H1 (cell line): ENCODE measurements at regions of chr1 and their contacts with region 1.

Region 1: DNA sequence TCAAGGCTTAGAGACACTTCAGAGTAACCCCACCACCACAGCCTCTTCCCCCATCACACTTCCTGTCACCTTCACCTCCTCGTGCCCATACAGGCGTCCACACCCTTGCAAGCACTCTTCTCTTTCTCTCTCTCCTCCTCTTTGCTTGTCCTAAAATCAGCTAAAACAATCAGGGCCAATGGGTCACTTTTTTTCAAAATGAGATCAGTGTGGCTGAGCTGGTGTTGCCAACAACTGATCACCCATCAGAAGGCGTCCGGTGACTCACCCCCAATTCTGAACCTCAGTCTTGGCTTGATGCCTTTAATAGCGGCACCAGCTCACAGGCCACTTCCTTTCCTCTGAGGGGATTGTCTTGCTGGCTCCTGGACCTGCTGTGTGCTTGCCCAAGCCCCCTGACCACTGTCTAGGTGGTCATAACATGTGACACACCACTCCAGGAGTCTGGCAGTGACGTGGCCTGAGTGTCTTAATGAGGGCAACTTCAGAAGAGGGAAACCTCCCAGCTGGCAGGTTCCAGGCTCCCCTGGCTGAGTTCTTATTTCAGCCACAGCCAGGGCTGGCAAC is 1.6 kb downstream of the DRAXIN start:
- DNase-seq: no peak
- H3K4me3 ChIP-seq: peak overlapping the region in 3 of 4 experiments; percentile 75 to 99 (median 79); a peak in 4 of 8 replicates
- H3K27ac ChIP-seq: no peak overlapping the region
- H3K4me1 ChIP-seq: peaks cover 8 to 38% (median 26%) of the 10 kb centered on the region in 4 experiments
- H3K27me3 ChIP-seq: peaks cover 0 to 2% (median 0%) of the 10 kb centered on the region in 4 experiments; a peak in 2 of 7 replicates
- CTCF ChIP-seq: no peak
- EP300 ChIP-seq: no peak
- POLR2A ChIP-seq: 0 out of 3 replicates have a peak, but pooled peaks of 1 of the 2 experiments have one; percentile 8
- RAD21 ChIP-seq: no peak

Region 2: DNA sequence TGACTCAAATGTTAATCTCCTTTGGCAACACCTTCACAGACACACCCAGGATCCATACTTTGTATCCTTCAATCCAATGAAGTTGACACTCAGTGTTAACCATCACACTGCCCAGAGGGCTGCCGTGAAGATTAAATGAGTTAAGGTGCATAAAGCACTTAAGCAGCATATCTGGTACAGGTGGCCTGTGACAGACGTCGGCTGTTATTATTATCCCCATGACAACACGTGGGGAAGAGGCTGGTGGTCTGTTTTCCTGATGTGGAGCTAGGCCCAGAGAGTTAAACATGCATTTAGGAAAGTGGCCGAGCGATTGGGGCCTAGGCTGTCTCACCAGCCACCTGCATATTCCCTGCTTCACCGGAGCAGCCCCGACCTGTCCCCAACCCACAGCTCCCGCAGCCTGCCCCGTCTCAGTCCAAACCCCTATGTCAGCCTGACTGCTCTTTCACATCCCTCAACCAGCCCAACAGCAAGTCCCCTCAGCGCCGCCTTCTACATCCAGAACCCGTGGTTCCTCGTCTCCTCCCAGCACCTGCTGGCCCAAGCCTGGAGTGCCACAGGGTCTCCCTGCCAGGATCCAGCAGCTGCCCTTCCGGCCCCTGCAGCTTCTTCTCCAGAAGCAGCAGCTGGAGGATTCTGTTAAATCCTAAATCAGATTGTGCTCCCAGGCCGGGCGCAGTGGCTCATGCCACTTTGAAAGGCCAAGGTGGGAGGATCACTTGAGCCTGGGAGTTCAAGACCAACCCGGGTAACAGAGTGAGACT is 116.8 kb before region 1 on chr1:
- CTCF ChIA-PET with region 1: no interaction called
- POLR2A ChIA-PET with region 1: no interaction called
- DNase-seq: no peak
- H3K4me3 ChIP-seq: no peak overlapping the region
- H3K27ac ChIP-seq: no peak overlapping the region
- H3K4me1 ChIP-seq: no peaks in the 10 kb centered on the region
- H3K27me3 ChIP-seq: no peaks in the 10 kb centered on the region
- CTCF ChIP-seq: no peak
- EP300 ChIP-seq: no peak
- POLR2A ChIP-seq: no peak
- RAD21 ChIP-seq: no peak

Region 3: DNA sequence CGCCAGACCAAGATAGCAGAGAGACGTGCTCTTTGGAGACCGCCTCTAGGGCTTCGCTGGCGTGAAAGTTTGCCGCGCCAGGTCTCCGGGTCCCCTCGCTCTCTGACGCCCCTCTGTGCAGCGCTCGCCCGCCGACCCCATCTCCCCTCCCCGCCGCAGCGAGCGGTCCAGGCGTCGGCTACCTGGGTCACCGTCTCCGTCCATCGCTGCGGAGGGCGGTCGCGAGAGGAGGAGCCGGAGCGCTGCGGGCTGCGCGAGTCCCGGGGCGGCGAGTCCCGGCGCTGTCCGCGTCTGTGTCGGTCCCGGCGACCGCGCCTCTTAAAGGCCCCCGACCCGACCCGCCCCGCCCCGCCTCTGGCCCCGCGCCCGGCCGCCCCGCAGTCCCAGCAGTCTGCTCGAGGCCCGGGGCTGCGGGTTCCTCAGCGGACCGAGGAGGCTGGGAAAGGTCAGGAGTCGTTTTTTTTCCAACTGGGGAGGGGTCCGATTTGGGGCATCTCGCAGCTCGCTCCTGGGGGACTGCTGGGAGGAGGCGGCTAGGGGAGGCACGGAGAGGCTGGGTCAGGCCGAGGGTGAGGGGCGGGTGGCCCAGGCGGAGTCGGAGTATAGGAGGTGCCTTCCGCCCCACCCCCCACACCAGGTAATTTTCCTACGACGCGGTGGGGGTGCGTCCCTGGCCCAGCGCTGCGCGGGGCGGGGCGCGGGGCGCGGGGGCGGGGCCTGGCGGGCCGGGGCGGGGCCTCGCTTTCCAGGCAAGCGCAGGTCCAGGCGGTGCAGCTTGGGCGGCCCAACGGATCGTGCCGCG is 38.8 kb before region 1 on chr1 and contains the starts of genes FBXO2 and FBXO44:
- CTCF ChIA-PET with region 1: interaction called, 7 read pairs
- POLR2A ChIA-PET with region 1: interaction called, 1,025 read pairs
- DNase-seq: peak in 1 of 2 experiments; percentile 90
- H3K4me3 ChIP-seq: peak within 1 kb of the TSS; percentile 56 to 78 (median 72)
- H3K27ac ChIP-seq: no peak within 1 kb of the TSS
- H3K4me1 ChIP-seq: peaks cover 6 to 35% (median 28%) of the 10 kb centered on the region in 4 experiments
- H3K27me3 ChIP-seq: peaks cover 0 to 4% (median 2%) of the 10 kb centered on the region in 4 experiments; a peak in 2 of 7 replicates
- CTCF ChIP-seq: no peak
- EP300 ChIP-seq: no peak
- POLR2A ChIP-seq: no peak
- RAD21 ChIP-seq: no peak
- total RNA-seq, gene FBXO2: 51.3 and 55.5 TPM in 2 replicates
- total RNA-seq, gene FBXO44: 27.2 and 29.2 TPM in 2 replicates

Region 4: DNA sequence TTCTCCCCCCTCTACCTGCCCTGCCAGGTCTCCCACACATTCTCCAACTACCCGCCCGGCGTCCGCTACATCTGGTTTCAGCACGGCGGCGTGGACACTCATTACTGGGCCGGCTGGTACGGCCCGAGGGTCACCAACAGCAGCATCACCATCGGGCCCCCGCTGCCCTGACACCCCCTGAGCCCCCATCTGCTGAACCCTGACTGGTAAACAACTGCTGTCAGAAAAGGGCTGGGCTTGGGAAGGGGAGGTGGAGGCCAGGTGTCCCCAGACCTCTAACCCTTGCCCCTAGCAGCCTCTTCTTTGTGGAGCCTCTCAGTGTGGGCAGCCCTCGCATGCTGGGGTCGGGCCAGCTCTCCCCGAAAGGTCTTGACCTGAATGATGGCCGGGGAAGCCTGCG is 32.0 kb before region 1 on chr1:
- CTCF ChIA-PET with region 1: interaction called, 10 read pairs
- POLR2A ChIA-PET with region 1: interaction called, 1,025 read pairs
- DNase-seq: no peak
- H3K4me3 ChIP-seq: no peak overlapping the region
- H3K27ac ChIP-seq: no peak overlapping the region
- H3K4me1 ChIP-seq: no peaks in the 10 kb centered on the region
- H3K27me3 ChIP-seq: no peaks in the 10 kb centered on the region; a peak in 2 of 7 replicates
- CTCF ChIP-seq: no peak
- EP300 ChIP-seq: no peak
- POLR2A ChIP-seq: no peak
- RAD21 ChIP-seq: no peak

Region 5: GRCh38 chr1:11707621-11708276 is 14.6 kb after region 1 on chr1:
- CTCF ChIA-PET with region 1: interaction called, 266 read pairs
- POLR2A ChIA-PET with region 1: interaction called, 329 read pairs
- DNase-seq: no peak
- H3K4me3 ChIP-seq: no peak overlapping the region
- H3K27ac ChIP-seq: no peak overlapping the region
- H3K4me1 ChIP-seq: peaks cover 7 to 36% (median 26%) of the 10 kb centered on the region in 4 experiments
- H3K27me3 ChIP-seq: no peaks in the 10 kb centered on the region
- CTCF ChIP-seq: no peak
- EP300 ChIP-seq: no peak
- POLR2A ChIP-seq: no peak
- RAD21 ChIP-seq: no peak

Region 6: DNA sequence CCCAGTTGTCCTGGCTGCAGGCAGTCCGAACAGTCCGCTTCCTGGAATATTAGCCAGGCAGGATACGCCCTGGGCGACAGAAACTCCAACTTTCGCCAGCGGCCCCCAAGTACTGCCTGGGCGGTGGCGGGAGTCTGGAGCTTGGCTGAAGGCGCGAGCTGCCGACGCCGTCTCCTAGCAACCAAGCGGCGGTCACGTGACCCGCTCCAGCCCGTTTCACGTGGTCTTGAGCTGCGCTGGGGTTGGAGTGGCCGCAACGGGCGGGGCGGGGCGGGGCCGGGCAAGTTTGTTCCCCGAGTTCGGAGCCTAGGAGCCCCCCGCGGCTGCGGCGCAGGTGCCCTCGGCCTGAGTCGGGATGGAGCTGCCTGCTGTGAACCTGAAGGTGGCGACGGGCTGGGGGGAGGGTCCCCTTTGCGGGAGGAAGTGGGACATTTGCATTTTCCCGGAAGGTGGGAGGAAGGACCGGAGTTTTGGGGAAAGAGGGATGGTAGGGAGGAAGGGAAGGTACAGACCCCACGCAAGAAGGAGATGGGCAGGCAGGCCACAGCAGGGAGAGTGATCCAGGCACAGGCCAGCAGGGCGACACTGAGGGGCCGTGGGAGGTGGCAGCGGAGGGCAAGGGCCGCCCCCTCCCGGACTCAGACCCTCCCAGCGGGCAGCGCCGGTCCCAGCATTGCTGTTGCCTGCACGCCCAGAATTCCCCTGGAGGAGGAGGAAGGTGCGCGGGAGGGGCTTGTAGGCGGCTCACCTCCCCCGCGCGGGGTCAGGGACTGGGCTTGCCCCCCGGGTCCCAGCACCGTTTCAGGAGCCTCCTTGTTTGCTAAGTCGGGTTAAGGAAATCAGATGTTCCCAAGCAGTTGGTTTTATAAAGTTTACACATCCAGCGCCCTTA is 43.0 kb after region 1 on chr1 and contains the start of gene AGTRAP:
- CTCF ChIA-PET with region 1: interaction called, 4 read pairs
- POLR2A ChIA-PET with region 1: interaction called, 35 read pairs
- DNase-seq: peak; percentile 79 to 96
- H3K4me3 ChIP-seq: peak within 1 kb of the TSS; percentile 58 to 86 (median 80)
- H3K27ac ChIP-seq: peak within 1 kb of the TSS; percentile 83
- H3K4me1 ChIP-seq: peaks cover 10 to 39% (median 13%) of the 10 kb centered on the region in 4 experiments
- H3K27me3 ChIP-seq: no peaks in the 10 kb centered on the region
- CTCF ChIP-seq: peak in 2 of 3 experiments; percentile 8 to 23; a peak in 2 of 4 replicates
- EP300 ChIP-seq: peak in 1 of 2 experiments; percentile 53; a peak in 1 of 3 replicates
- POLR2A ChIP-seq: peak in 1 of 2 experiments; percentile 73; a peak in 2 of 3 replicates
- RAD21 ChIP-seq: no peak
- total RNA-seq, gene AGTRAP: 69.7 and 70.9 TPM in 2 replicates